ENCODE measurements at regions of chr12 and their contacts with region 1.

Region 1: DNA sequence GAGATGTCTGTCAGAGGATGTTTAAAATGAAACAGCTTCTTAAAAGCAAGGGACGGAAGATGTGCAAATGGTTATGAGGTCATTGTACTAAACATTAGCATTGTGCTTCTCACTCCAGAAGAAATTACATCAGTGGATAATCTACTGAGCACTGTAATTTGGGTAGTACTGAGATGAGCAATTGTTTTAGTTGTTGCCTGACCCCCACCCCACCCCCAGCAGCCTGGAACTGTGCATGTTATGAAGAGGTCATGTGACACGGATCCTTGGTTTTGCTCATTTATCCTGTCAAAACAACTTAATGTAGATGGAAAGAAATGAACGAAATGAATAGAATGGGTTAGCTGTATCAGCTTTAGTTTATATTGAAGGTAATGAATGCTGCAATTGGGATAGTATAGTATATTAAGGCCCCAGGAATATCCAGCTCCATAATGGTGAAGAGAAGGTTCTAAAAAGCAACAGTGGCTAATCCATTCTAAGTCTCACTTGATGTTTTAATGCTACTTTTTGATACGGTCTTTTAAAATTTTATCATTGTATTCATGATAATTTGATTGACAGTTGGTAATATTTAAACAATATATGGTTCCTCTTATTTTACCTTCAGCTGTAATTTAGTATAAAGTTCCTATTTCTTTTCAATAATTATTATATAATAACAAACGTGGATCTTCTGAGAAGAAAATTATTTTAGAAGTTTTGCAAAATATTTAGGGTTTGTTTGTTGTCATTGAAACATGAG is 58.5 kb downstream of the WNK1 start:
- DNase-seq: no peak
- ATAC-seq: peak; percentile 17
- H3K4me3 ChIP-seq: no peak overlapping the region
- H3K4me3 Mint-ChIP-seq: peak overlapping the region; percentile 33
- H3K27ac ChIP-seq: peak overlapping the region in 1 of 2 experiments; percentile 26
- H3K27ac Mint-ChIP-seq: peak overlapping the region; percentile 73
- H3K4me1 ChIP-seq: peaks cover 45% of the 10 kb centered on the region
- H3K4me1 Mint-ChIP-seq: peaks cover 68% of the 10 kb centered on the region
- H3K27me3 ChIP-seq: no peaks in the 10 kb centered on the region
- H3K27me3 Mint-ChIP-seq: no peaks in the 10 kb centered on the region
- CTCF ChIP-seq: no peak

Region 2: GRCh38 chr12:569803-570434 is 240.9 kb before region 1 on chr12:
- CTCF ChIA-PET with region 1: interaction called, 107 read pairs
- POLR2A ChIA-PET with region 1: interaction called, 4 read pairs
- intact Hi-C with region 1: loop called (anchors 1 kb)
- DNase-seq: peak; percentile 74 to 93 (median 87)
- ATAC-seq: peak; percentile 98
- H3K4me3 ChIP-seq: peak overlapping the region; percentile 63 to 76
- H3K4me3 Mint-ChIP-seq: peak overlapping the region; percentile 86
- H3K27ac ChIP-seq: peak overlapping the region in 1 of 2 experiments; percentile 8
- H3K27ac Mint-ChIP-seq: peak overlapping the region; percentile 77
- H3K4me1 ChIP-seq: peaks cover 43% of the 10 kb centered on the region
- H3K4me1 Mint-ChIP-seq: peaks cover 45% of the 10 kb centered on the region
- H3K27me3 ChIP-seq: no peaks in the 10 kb centered on the region
- H3K27me3 Mint-ChIP-seq: no peaks in the 10 kb centered on the region
- CTCF ChIP-seq: peak; percentile 88

Region 3: GRCh38 chr12:614411-614970 is 196.4 kb before region 1 on chr12:
- CTCF ChIA-PET with region 1: interaction called, 88 read pairs
- POLR2A ChIA-PET with region 1: interaction called, 4 read pairs
- intact Hi-C with region 1: loop called (anchors 1 kb)
- DNase-seq: peak in 8 of 9 experiments; percentile 15 to 60 (median 46)
- ATAC-seq: peak; percentile 41
- H3K4me3 ChIP-seq: no peak overlapping the region
- H3K4me3 Mint-ChIP-seq: no peak overlapping the region
- H3K27ac ChIP-seq: no peak overlapping the region
- H3K27ac Mint-ChIP-seq: no peak overlapping the region
- H3K4me1 ChIP-seq: peaks cover 19% of the 10 kb centered on the region
- H3K4me1 Mint-ChIP-seq: peaks cover 32% of the 10 kb centered on the region
- H3K27me3 ChIP-seq: no peaks in the 10 kb centered on the region
- H3K27me3 Mint-ChIP-seq: no peaks in the 10 kb centered on the region
- CTCF ChIP-seq: no peak

Region 4: DNA sequence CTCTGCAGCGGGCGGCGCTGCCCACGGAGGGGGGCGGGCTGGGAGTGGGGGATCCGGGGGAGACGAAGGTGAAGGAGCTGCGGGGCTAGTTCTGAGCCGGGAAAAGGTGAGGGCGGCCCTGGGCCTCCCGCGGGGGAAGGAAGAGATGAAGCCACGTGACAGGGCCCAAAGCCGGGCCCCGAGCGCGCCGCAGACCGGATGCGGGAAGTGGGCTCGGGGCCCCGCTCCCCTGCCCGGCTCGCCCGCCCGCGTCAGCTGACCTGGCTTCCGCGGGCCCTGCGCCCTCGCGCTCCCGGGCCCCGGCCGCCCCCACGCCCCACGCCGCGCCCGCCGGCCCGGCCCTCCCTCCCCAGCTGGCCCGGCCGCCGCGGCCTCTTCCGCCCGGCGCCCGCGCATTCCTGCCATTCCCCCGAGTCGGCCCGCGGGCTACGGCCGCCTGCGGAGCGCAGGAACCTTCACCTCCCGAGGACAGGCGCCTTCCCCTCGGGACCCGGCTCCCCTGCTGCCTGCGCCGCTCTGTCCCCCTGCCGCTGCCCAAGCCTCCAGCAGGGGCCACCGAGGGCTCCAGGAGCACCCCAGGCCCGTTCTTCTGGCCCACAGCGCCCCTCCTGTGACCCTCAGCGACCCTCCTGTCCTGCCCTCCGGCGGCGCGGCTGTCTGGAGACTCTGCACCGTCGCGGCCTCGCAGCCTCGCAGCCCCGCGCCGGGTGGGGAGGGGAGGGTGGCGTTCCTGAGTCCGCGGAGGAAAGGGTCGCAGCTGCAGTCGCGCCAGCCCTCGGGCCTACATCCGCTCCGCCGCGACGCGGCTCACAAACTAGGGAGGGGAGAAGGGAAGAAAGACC is 168.0 kb before region 1 on chr12:
- CTCF ChIA-PET with region 1: interaction called, 4 read pairs
- POLR2A ChIA-PET with region 1: no interaction called
- intact Hi-C with region 1: loop called in 1 of 2 experiments (anchors 5 kb)
- DNase-seq: peak; percentile 39 to 91 (median 77)
- ATAC-seq: peak; percentile 75
- H3K4me3 ChIP-seq: peak overlapping the region; percentile 62 to 70
- H3K4me3 Mint-ChIP-seq: peak overlapping the region; percentile 89
- H3K27ac ChIP-seq: peak overlapping the region; percentile 72 to 88
- H3K27ac Mint-ChIP-seq: peak overlapping the region; percentile 97
- H3K4me1 ChIP-seq: peaks cover 36% of the 10 kb centered on the region
- H3K4me1 Mint-ChIP-seq: peaks cover 54% of the 10 kb centered on the region
- H3K27me3 ChIP-seq: no peaks in the 10 kb centered on the region
- H3K27me3 Mint-ChIP-seq: no peaks in the 10 kb centered on the region
- CTCF ChIP-seq: peak; percentile 34

Region 5: GRCh38 chr12:666766-667308 is 144.0 kb before region 1 on chr12:
- CTCF ChIA-PET with region 1: interaction called, 12 read pairs
- POLR2A ChIA-PET with region 1: interaction called, 3 read pairs
- intact Hi-C with region 1: no loop called
- DNase-seq: peak in 2 of 9 experiments; percentile 61
- ATAC-seq: peak; percentile 39
- H3K4me3 ChIP-seq: no peak overlapping the region
- H3K4me3 Mint-ChIP-seq: peak overlapping the region; percentile 18
- H3K27ac ChIP-seq: no peak overlapping the region
- H3K27ac Mint-ChIP-seq: peak overlapping the region; percentile 3
- H3K4me1 ChIP-seq: peaks cover 37% of the 10 kb centered on the region
- H3K4me1 Mint-ChIP-seq: peaks cover 58% of the 10 kb centered on the region
- H3K27me3 ChIP-seq: no peaks in the 10 kb centered on the region
- H3K27me3 Mint-ChIP-seq: no peaks in the 10 kb centered on the region
- CTCF ChIP-seq: no peak

Region 6: GRCh38 chr12:779745-780734 is 30.8 kb before region 1 on chr12:
- CTCF ChIA-PET with region 1: interaction called, 8 read pairs
- POLR2A ChIA-PET with region 1: interaction called, 3 read pairs
- intact Hi-C with region 1: loop called (anchors 5 kb)
- DNase-seq: peak in 1 of 9 experiments; percentile 31
- ATAC-seq: peak; percentile 56
- H3K4me3 ChIP-seq: no peak overlapping the region
- H3K4me3 Mint-ChIP-seq: peak overlapping the region; percentile 70
- H3K27ac ChIP-seq: no peak overlapping the region
- H3K27ac Mint-ChIP-seq: peak overlapping the region; percentile 5
- H3K4me1 ChIP-seq: peaks cover 34% of the 10 kb centered on the region
- H3K4me1 Mint-ChIP-seq: peaks cover 70% of the 10 kb centered on the region
- H3K27me3 ChIP-seq: no peaks in the 10 kb centered on the region
- H3K27me3 Mint-ChIP-seq: no peaks in the 10 kb centered on the region
- CTCF ChIP-seq: no peak

Region 7: GRCh38 chr12:835754-836518 is 25.1 kb after region 1 on chr12:
- CTCF ChIA-PET with region 1: interaction called, 10 read pairs
- POLR2A ChIA-PET with region 1: no interaction called
- intact Hi-C with region 1: no loop called
- DNase-seq: no peak
- ATAC-seq: no peak
- H3K4me3 ChIP-seq: no peak overlapping the region
- H3K4me3 Mint-ChIP-seq: no peak overlapping the region
- H3K27ac ChIP-seq: no peak overlapping the region
- H3K27ac Mint-ChIP-seq: peak overlapping the region; percentile 49
- H3K4me1 ChIP-seq: no peaks in the 10 kb centered on the region
- H3K4me1 Mint-ChIP-seq: peaks cover 46% of the 10 kb centered on the region
- H3K27me3 ChIP-seq: no peaks in the 10 kb centered on the region
- H3K27me3 Mint-ChIP-seq: no peaks in the 10 kb centered on the region
- CTCF ChIP-seq: no peak

Region 8: DNA sequence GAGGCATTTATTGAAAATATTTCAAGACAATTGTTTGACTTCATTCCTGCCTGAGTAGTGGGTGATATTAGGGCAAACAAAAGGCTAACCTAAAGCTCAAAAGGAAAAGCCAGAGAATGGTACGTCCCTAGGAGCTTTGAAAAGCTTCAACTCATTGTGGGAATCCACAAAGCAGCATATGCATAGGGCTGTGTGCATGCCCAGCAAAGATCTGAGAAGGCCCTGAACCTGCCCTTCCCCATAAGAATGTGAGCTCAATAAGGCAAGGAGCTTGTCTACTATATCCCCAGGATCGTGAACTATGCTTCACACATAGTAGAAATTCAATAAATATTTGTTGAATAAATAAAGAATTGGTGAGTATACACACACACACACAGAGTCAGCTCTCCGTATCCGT is 157.7 kb after region 1 on chr12:
- CTCF ChIA-PET with region 1: no interaction called
- POLR2A ChIA-PET with region 1: no interaction called
- intact Hi-C with region 1: no loop called
- DNase-seq: no peak
- ATAC-seq: no peak
- H3K4me3 ChIP-seq: no peak overlapping the region
- H3K4me3 Mint-ChIP-seq: no peak overlapping the region
- H3K27ac ChIP-seq: no peak overlapping the region
- H3K27ac Mint-ChIP-seq: no peak overlapping the region
- H3K4me1 ChIP-seq: no peaks in the 10 kb centered on the region
- H3K4me1 Mint-ChIP-seq: no peaks in the 10 kb centered on the region
- H3K27me3 ChIP-seq: no peaks in the 10 kb centered on the region
- H3K27me3 Mint-ChIP-seq: no peaks in the 10 kb centered on the region
- CTCF ChIP-seq: no peak

Measured in CD8-positive, alpha-beta T cell (primary cell).